ENCODE measurements at regions of chr11 and their contacts with region 1.

Region 1: GRCh38 chr11:33362051-33362910 is 105.1 kb downstream of the HIPK3 start:
- DNase-seq: peak; percentile 15 to 47
- ATAC-seq: peak; percentile 33 to 75; a peak in 4 of 6 replicates
- H3K4me3 ChIP-seq: no peak overlapping the region
- H3K27ac ChIP-seq: no peak overlapping the region
- H3K4me1 ChIP-seq: no peaks in the 10 kb centered on the region
- CTCF ChIP-seq: peak; percentile 83
- EP300 ChIP-seq: no peak
- POLR2A ChIP-seq: no peak
- RAD21 ChIP-seq: peak; percentile 85 to 92

Region 2: DNA sequence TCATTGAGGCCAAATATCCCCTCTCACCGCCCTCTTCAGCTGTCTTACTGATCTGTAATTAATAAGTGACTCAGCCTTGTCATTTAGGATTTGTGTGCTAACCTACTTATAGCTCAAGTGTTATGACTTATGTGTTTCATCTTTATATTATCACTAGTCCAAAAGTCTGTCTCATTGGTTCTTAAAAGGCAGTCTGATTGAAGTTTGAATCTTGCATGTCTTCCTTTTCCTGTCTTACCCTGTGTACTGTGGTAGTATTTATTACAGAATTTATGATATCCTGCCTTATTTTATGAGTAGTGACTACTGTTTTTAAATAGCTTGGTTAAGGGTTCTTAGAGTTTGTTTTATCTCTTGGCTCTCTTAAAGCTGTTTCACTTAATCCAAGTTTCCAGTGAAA is 340.3 kb before region 1 on chr11:
- CTCF ChIA-PET with region 1: no interaction called
- POLR2A ChIA-PET with region 1: no interaction called
- DNase-seq: no peak
- ATAC-seq: no peak
- H3K4me3 ChIP-seq: no peak overlapping the region
- H3K27ac ChIP-seq: no peak overlapping the region
- H3K4me1 ChIP-seq: peaks cover 28% of the 10 kb centered on the region
- CTCF ChIP-seq: no peak
- EP300 ChIP-seq: no peak
- POLR2A ChIP-seq: no peak
- RAD21 ChIP-seq: no peak

Region 3: GRCh38 chr11:33344611-33345010 is 17.7 kb before region 1 on chr11:
- CTCF ChIA-PET with region 1: interaction called, 15 read pairs
- POLR2A ChIA-PET with region 1: no interaction called
- DNase-seq: peak in 1 of 2 experiments; percentile 43
- ATAC-seq: peak; percentile 62 to 69; a peak in 3 of 6 replicates
- H3K4me3 ChIP-seq: no peak overlapping the region
- H3K27ac ChIP-seq: no peak overlapping the region
- H3K4me1 ChIP-seq: no peaks in the 10 kb centered on the region
- CTCF ChIP-seq: no peak
- EP300 ChIP-seq: no peak
- POLR2A ChIP-seq: no peak
- RAD21 ChIP-seq: 0 out of 5 replicates have a peak, but pooled peaks of 1 of the 2 experiments have one; percentile 26

Region 4: DNA sequence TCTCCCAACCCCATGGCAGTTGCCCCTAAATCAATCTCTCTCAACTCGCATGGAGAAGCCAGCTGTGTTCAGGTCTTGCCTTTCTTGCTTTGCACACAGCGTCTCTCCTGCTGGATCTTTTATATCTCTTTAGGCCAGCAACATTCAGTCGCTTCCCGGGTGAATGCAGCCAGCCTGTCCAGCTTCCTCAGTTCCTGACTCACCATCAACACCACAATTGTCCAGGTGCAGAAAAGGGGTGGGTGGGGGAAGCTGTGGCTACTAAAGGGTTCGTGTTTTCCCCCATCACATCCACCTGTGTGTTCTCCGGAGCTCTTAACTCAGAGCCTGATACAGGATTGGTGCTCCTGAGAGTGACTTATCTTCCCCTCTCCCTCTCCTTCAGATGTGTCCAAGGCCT is 11.4 kb after region 1 on chr11:
- CTCF ChIA-PET with region 1: interaction called, 19 read pairs
- POLR2A ChIA-PET with region 1: no interaction called
- DNase-seq: no peak
- ATAC-seq: no peak
- H3K4me3 ChIP-seq: no peak overlapping the region
- H3K27ac ChIP-seq: 0 out of 6 replicates have a peak overlapping the region, but pooled peaks of 1 of the 2 experiments have one; percentile 8
- H3K4me1 ChIP-seq: peaks cover 31% of the 10 kb centered on the region
- CTCF ChIP-seq: no peak
- EP300 ChIP-seq: no peak
- POLR2A ChIP-seq: no peak
- RAD21 ChIP-seq: no peak

Region 5: GRCh38 chr11:33616552-33616951 is 254.3 kb after region 1 on chr11:
- CTCF ChIA-PET with region 1: no interaction called
- POLR2A ChIA-PET with region 1: no interaction called
- DNase-seq: no peak
- ATAC-seq: no peak
- H3K4me3 ChIP-seq: no peak overlapping the region
- H3K27ac ChIP-seq: no peak overlapping the region
- H3K4me1 ChIP-seq: no peaks in the 10 kb centered on the region
- CTCF ChIP-seq: no peak
- EP300 ChIP-seq: no peak
- POLR2A ChIP-seq: no peak
- RAD21 ChIP-seq: no peak

Measured in A549 (cell line).